ENCODE measurements at regions of chr2 and their contacts with region 1.

Region 1: DNA sequence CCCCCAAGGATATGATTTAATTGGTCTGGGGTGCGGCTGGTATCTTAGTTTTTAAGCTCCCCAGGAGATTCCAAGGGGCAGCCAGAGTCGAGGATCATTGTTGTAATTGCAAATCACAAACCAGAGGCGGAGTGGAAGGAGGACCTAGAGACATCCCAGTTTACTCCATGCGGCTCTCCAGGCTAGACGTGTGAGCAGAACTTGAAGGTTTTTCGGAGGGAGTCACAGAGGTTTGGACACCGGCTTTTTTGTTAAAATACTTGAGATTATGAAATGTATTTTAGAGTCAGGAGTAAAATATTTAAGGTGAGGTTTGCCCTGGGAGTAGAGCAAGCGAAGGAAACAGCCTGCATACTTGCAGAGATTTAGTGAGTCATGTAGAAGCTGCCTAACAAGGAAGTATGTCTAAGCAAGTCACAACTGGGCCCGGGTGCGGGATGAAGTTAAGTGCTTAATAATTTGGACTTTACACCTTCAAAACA is 39.5 kb downstream of the TGOLN2 start:
- DNase-seq: no peak
- ATAC-seq: no peak

Region 2: DNA sequence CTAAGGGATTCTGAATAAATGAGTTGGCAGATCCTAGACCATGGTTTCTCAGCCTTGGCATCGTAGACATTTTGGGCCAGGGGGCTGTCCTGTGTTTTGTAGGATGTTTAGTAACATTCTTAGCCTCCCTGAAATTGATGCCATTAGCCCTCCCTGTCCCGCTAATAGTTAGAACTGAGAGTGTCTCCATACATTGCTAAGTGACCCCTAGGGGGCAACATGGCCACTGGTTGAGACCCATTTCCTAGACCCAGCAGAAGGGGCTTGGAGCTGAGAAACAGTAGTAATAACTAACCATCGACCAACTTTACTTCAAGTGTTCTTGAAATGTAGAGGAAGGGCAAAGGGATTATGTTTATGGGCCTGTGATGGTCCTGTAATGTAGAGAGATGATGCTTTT is 276.5 kb before region 1 on chr2:
- intact Hi-C with region 1: loop called (anchors 5 kb)
- DNase-seq: no peak
- ATAC-seq: no peak

Measured in sciatic nerve (tissue), 2 donors.